ENCODE measurements at regions of chr17 and their contacts with region 1.

Region 1: GRCh38 chr17:55295411-55296170 is 30.8 kb downstream of the HLF start:
- DNase-seq: no peak
- ATAC-seq: peak; percentile 89

Region 2: GRCh38 chr17:54992797-54993639 is 302.6 kb before region 1 on chr17:
- intact Hi-C with region 1: loop called (anchors 2 kb)
- DNase-seq: no peak
- ATAC-seq: no peak

Region 3: DNA sequence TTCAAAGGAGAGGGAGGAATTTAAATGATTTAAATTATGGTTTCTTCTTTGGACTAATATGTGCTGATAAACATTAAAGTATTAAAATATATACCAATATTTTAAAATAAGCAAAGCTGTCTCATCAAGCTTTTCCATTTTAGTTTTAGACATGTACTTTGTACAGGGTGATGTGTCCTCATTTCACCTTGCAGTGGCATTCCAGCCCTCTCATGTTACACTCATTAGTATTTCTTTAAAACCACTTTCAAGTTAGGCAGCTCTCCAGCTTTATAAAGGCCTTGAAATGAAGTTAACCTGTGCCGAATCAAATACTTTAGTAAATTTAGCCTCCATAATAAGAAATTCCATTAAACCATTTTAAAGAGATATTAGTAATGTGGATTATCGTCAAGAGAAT is 138.5 kb before region 1 on chr17:
- intact Hi-C with region 1: loop called (anchors 5 kb)
- DNase-seq: no peak
- ATAC-seq: peak; percentile 57

Region 4: DNA sequence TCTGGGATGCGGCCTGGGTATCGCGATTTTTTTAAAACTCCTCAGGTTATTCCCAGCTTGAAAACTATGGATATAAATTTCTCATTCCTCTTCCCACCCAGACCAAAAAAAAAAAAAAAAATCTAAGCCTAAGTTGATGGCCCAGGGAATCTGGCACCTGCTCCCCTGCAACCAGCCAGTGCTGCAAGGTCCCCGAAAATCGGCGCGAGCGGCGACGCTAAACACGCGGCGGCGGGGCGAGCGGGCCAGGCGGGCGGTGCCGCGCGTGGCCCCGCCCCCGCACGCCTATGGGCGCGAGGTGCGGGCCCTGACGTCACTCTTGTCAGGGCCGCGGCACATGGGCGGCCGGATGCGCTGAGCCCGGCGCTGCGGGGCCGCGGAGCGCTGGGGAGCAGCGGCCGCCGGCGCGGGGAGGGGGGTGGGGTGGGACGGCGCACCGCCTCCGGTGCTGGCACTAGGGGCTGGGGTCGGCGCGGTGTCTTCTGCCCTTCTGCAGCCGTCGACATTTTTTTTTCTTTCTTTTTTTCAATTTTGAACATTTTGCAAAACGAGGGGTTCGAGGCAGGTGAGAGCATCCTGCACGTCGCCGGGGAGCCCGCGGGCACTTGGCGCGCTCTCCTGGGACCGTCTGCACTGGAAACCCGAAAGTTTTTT is 30.8 kb before region 1 on chr17 and contains the start of gene HLF:
- intact Hi-C with region 1: loop called (anchors 1 kb)
- DNase-seq: peak; percentile 91
- ATAC-seq: peak; percentile 95
- total RNA-seq, gene HLF: 35.7 TPM

Region 5: DNA sequence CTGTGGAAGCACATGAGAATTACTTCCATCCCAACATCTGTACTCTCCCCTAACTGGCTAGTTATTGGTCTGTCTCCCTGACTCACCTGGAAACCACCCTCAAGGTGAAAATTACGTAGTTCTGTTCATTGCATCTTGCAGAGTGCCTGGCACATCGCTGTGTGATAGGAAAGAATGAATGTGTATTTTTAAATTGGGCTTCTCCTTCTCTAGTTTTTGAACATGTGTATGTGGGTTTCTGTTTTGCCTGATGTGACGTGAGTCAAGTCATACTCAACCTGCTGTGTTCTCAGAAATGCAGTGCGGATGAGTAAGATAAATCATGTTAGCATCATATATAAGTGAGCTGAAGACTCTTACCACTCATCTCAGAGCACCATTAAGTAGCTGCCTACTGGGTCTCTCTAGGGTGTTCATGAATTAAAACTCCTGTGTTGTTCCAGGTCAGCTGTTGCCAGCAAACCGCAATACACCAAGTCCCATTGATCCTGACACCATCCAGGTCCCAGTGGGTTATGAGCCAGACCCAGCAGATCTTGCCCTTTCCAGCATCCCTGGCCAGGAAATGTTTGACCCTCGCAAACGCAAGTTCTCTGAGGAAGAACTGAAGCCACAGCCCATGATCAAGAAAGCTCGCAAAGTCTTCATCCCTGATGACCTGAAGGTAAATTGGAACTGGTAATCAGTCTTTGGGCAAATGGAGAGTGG is 19.3 kb after region 1 on chr17:
- intact Hi-C with region 1: no loop called
- DNase-seq: no peak
- ATAC-seq: no peak